A673 (cell line): ENCODE measurements at regions of chr20 and their contacts with region 1.

Region 1: GRCh38 chr20:20037960-20038359 is 14.3 kb downstream of the CRNKL1 start:
- DNase-seq: peak; percentile 18
- H3K4me3 ChIP-seq: no peak overlapping the region
- H3K27ac ChIP-seq: no peak overlapping the region
- H3K4me1 ChIP-seq: peaks cover 3% of the 10 kb centered on the region
- H3K27me3 ChIP-seq: no peaks in the 10 kb centered on the region
- CTCF ChIP-seq: no peak

Region 2: GRCh38 chr20:20096421-20096820 is 58.5 kb after region 1 on chr20:
- CTCF ChIA-PET with region 1: no interaction called
- POLR2A ChIA-PET with region 1: no interaction called
- intact Hi-C with region 1: loop called (anchors 10 kb)
- DNase-seq: no peak
- H3K4me3 ChIP-seq: no peak overlapping the region
- H3K27ac ChIP-seq: no peak overlapping the region
- H3K4me1 ChIP-seq: no peaks in the 10 kb centered on the region
- H3K27me3 ChIP-seq: peaks cover 8% of the 10 kb centered on the region
- CTCF ChIP-seq: no peak